ENCODE measurements at regions of chr12 and their contacts with region 1.

Region 1: GRCh38 chr12:92136965-92137721 is 8.5 kb downstream of the BTG1 start:
- DNase-seq: no peak
- H3K4me3 Mint-ChIP-seq: peak overlapping the region; percentile 100
- H3K27ac Mint-ChIP-seq: peak overlapping the region; percentile 99
- H3K4me1 Mint-ChIP-seq: peaks cover 58% of the 10 kb centered on the region
- H3K27me3 Mint-ChIP-seq: no peaks in the 10 kb centered on the region

Region 2: DNA sequence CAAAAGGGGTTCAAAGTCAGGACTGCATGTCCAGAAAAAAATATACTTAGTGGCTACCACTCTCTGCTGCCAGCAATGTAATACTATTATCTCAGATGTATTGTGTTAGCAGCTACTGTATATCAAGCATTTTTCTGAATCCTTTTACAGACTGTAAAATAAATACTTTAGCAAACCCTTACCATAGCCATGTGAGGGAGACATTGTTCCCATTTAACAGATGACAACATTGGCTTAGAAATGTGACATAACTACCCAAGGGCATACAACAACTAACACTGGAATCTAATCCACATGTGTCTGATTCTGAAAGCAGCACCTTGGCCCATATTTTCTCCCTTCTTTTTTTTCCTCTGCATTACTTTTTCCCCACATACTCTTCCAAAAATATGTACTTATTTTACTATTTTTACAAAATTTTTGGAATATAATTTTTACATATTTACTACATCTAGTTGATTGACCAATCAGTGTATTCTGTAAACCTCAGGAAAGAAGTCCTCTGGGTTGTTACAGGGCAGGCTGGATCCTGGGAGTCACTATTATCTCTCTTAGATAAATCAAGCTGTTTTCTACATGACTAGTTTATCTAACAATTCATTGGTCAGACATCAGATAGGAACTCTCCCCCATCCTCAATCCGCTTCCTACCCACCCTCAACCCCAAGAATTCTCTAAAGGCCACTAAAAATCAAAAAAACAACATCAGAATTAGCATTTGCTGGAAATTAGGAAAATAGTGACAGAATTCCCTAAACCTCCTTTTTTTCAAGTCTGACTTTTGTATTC is 145.6 kb before region 1 on chr12:
- CTCF ChIA-PET with region 1: interaction called, 3 read pairs
- intact Hi-C with region 1: loop called (anchors 1 kb)
- DNase-seq: no peak
- H3K4me3 Mint-ChIP-seq: no peak overlapping the region
- H3K27ac Mint-ChIP-seq: no peak overlapping the region
- H3K4me1 Mint-ChIP-seq: peaks cover 61% of the 10 kb centered on the region
- H3K27me3 Mint-ChIP-seq: no peaks in the 10 kb centered on the region

Region 3: DNA sequence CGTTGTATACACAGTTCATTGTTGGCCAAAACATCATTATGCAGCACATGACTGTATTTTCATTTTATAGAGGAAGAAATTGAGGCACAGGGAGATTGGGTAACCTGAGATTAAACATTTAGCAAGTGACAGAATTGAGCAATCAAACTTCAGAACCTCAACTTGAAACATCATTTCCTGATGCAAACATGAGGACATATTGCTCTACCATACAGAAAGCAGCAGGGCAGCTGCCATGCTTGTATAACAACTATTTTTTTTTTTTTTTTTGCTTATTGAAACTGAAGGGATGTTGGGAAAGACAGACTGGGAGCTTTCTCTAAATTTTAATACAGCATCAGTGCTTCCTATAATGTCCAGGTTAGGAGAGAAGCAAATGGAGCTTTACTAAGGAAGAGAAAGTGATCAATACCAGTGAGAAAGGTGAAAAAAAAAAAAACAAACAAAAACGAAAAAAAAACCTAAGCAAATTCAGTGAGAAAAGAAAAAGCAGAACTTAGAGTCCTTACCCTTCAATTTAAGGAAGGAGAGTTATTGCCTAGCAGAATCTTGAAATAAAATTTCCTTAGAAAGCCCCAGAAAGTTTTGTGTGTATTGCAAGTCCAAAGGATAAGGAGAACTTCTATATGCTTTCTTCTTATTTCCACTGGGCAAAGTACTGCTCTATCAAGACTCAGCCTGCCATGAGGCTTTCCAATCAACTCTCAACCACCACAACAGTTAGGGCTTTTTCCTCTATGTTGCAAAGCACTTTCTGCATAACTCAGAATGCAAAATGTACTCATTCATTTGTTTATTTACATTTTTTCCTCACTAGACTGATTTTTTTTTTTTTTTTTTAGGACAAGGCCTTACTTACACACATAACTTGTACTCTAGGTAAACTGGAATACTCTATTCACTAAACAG is 13.1 kb before region 1 on chr12:
- CTCF ChIA-PET with region 1: interaction called, 4 read pairs
- intact Hi-C with region 1: loop called (anchors 1 kb)
- DNase-seq: no peak
- H3K4me3 Mint-ChIP-seq: peak overlapping the region; percentile 34
- H3K27ac Mint-ChIP-seq: peak overlapping the region; percentile 91
- H3K4me1 Mint-ChIP-seq: peaks cover 77% of the 10 kb centered on the region
- H3K27me3 Mint-ChIP-seq: no peaks in the 10 kb centered on the region